Activated naive CD4-positive, alpha-beta T cell treated with anti-CD3 and anti-CD28 coated beads for 36 hours (primary cell): ENCODE measurements at regions of chr9 and their contacts with region 1.

Region 1: DNA sequence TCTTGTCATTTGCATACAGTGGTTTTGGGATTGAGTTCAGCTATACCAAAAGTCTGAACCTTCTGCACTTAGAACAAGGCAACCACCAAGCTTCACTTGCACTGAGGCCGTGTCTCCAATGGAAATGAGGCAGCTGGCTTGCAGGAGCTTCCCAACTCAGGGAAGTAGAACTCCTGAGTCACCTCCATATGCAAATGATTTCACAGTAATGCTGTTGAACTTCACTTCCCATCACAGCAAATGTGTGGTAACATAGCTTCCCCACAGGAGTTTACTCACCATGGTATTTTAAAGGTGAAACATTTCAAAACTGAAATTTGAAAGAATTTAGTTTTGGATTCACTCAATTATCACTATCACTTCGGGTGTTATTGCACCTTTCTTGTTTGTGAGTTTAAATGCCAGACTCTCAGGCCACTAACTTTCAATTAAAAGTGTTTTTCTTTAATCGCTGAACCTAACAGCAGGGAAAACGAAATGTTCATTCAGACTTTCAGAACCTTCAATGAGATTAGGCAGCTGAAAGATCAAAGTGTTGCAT is 9.0 kb downstream of the CD274 start:
- DNase-seq: peak; percentile 61
- H3K4me3 Mint-ChIP-seq: peak overlapping the region; percentile 57
- H3K27ac Mint-ChIP-seq: peak overlapping the region; percentile 84
- H3K4me1 Mint-ChIP-seq: peaks cover 65% of the 10 kb centered on the region
- H3K27me3 Mint-ChIP-seq: no peaks in the 10 kb centered on the region

Region 2: DNA sequence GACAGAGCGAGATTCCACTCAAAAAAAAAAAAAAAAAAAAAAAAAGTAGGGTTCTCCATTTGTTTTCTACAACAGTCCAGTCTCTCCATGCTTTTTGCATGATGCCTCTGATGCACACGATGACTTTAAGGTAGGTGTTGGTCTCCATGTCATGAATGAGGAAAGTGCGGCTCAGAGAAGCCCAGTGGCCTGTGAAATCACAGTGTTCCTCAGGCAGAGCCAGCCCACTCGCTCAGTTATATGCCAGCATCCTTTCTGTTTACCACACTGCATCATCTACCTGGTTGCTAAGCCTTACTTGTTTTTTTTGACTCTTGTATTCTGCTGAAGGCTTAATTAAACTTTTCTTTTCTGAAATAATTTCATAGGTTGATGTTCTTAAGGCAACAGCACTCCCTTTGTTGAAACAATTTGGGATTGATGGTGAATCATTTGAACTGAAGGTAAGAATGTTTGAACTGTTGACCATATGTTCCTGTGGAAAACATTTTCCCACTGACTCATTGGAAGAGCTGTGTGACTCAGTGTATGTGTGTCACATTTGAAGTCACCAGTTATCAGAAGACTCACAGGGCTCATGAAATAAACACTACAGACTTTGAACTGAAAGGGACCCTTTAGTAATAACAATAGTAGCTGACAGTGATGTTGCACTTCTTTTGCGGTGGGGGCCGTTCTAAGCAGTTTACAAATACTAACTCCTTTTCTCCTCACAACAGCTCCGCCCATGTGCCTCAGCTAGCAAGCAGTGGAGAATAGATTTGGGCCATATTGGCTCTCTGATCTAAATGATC is 626.4 kb before region 1 on chr9:
- CTCF ChIA-PET with region 1: no interaction called
- intact Hi-C with region 1: loop called (anchors 1 kb)
- DNase-seq: peak; percentile 80
- H3K4me3 Mint-ChIP-seq: no peak overlapping the region
- H3K27ac Mint-ChIP-seq: peak overlapping the region; percentile 85
- H3K4me1 Mint-ChIP-seq: peaks cover 46% of the 10 kb centered on the region
- H3K27me3 Mint-ChIP-seq: no peaks in the 10 kb centered on the region

Region 3: GRCh38 chr9:5493679-5494511 is 34.5 kb after region 1 on chr9:
- CTCF ChIA-PET with region 1: interaction called, 3 read pairs
- intact Hi-C with region 1: loop called (anchors 1 kb)
- DNase-seq: peak; percentile 39
- H3K4me3 Mint-ChIP-seq: no peak overlapping the region
- H3K27ac Mint-ChIP-seq: peak overlapping the region; percentile 48
- H3K4me1 Mint-ChIP-seq: peaks cover 17% of the 10 kb centered on the region
- H3K27me3 Mint-ChIP-seq: no peaks in the 10 kb centered on the region

Region 4: GRCh38 chr9:5562806-5563416 is 103.6 kb after region 1 on chr9:
- CTCF ChIA-PET with region 1: no interaction called
- intact Hi-C with region 1: loop called (anchors 1 kb)
- DNase-seq: no peak
- H3K4me3 Mint-ChIP-seq: no peak overlapping the region
- H3K27ac Mint-ChIP-seq: no peak overlapping the region
- H3K4me1 Mint-ChIP-seq: peaks cover 43% of the 10 kb centered on the region
- H3K27me3 Mint-ChIP-seq: no peaks in the 10 kb centered on the region

Region 5: GRCh38 chr9:5786370-5787127 is 327.2 kb after region 1 on chr9:
- CTCF ChIA-PET with region 1: no interaction called
- intact Hi-C with region 1: loop called (anchors 5 kb)
- DNase-seq: no peak
- H3K4me3 Mint-ChIP-seq: no peak overlapping the region
- H3K27ac Mint-ChIP-seq: peak overlapping the region; percentile 75
- H3K4me1 Mint-ChIP-seq: peaks cover 41% of the 10 kb centered on the region
- H3K27me3 Mint-ChIP-seq: no peaks in the 10 kb centered on the region

Region 6: GRCh38 chr9:5909976-5910375 is 450.6 kb after region 1 on chr9:
- CTCF ChIA-PET with region 1: no interaction called
- intact Hi-C with region 1: loop called (anchors 2 kb)
- DNase-seq: no peak
- H3K4me3 Mint-ChIP-seq: peak overlapping the region; percentile 32
- H3K27ac Mint-ChIP-seq: peak overlapping the region; percentile 89
- H3K4me1 Mint-ChIP-seq: peaks cover 29% of the 10 kb centered on the region
- H3K27me3 Mint-ChIP-seq: no peaks in the 10 kb centered on the region